ENCODE measurements at regions of chr5 and their contacts with region 1.

Region 1: GRCh38 chr5:23655674-23656073 is 148.3 kb downstream of the PRDM9 start:
- DNase-seq: peak; percentile 83
- H3K4me3 ChIP-seq: no peak overlapping the region
- H3K27ac ChIP-seq: no peak overlapping the region
- H3K4me1 ChIP-seq: peaks cover 12% of the 10 kb centered on the region
- H3K27me3 ChIP-seq: no peaks in the 10 kb centered on the region
- CTCF ChIP-seq: no peak

Region 2: DNA sequence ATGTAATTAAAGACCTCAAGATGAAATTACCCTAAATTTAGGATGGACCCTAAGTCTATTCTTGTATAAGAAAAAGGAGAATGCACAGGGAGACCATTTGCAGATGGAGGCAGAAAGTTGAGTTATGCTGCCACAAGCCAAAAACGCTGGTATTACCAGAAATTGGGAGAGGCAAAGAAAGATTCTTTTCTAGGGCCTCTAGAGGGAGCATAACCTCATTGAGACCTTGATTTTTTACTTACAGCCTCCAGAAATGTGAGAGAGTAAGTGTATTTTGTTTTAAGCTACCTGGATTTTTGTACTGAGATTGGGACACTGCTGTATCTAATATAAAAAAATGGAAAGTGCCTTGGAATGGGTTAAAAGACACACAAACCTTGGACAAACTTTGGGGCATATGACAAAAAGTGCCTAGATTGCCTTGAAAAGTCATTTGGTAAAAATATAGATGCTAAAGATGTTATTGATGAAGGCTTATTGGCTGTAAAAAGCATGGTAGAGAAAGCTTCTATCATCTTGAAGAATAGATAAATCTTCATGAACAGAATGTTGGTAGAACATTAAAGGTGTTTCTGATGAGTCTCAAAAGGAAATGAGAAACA is 322.9 kb before region 1 on chr5:
- CTCF ChIA-PET with region 1: no interaction called
- dilution Hi-C with region 1: no loop called
- in situ Hi-C with region 1: no loop called
- intact Hi-C with region 1: loop called (anchors 10 kb)
- DNase-seq: peak; percentile 24
- H3K4me3 ChIP-seq: no peak overlapping the region
- H3K27ac ChIP-seq: no peak overlapping the region
- H3K4me1 ChIP-seq: no peaks in the 10 kb centered on the region
- H3K27me3 ChIP-seq: no peaks in the 10 kb centered on the region
- CTCF ChIP-seq: peak; percentile 58 to 65